CD8-positive, alpha-beta T cell (primary cell): ENCODE measurements at regions of chr1 and their contacts with region 1.

Region 1: DNA sequence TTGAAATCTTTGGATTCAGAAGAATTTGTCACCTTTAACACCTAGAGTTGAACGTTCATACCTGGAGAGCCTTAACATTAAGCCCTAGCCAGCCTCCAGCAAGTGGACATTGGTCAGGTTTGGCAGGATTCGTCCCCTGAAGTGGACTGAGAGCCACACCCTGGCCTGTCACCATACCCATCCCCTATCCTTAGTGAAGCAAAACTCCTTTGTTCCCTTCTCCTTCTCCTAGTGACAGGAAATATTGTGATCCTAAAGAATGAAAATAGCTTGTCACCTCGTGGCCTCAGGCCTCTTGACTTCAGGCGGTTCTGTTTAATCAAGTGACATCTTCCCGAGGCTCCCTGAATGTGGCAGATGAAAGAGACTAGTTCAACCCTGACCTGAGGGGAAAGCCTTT is 52.3 kb downstream of the UBE4B start:
- DNase-seq: no peak
- ATAC-seq: no peak
- H3K4me3 ChIP-seq: no peak overlapping the region
- H3K4me3 Mint-ChIP-seq: no peak overlapping the region
- H3K27ac ChIP-seq: no peak overlapping the region
- H3K27ac Mint-ChIP-seq: no peak overlapping the region
- H3K4me1 ChIP-seq: no peaks in the 10 kb centered on the region
- H3K4me1 Mint-ChIP-seq: peaks cover 10% of the 10 kb centered on the region
- H3K27me3 ChIP-seq: no peaks in the 10 kb centered on the region
- H3K27me3 Mint-ChIP-seq: no peaks in the 10 kb centered on the region
- CTCF ChIP-seq: no peak

Region 2: DNA sequence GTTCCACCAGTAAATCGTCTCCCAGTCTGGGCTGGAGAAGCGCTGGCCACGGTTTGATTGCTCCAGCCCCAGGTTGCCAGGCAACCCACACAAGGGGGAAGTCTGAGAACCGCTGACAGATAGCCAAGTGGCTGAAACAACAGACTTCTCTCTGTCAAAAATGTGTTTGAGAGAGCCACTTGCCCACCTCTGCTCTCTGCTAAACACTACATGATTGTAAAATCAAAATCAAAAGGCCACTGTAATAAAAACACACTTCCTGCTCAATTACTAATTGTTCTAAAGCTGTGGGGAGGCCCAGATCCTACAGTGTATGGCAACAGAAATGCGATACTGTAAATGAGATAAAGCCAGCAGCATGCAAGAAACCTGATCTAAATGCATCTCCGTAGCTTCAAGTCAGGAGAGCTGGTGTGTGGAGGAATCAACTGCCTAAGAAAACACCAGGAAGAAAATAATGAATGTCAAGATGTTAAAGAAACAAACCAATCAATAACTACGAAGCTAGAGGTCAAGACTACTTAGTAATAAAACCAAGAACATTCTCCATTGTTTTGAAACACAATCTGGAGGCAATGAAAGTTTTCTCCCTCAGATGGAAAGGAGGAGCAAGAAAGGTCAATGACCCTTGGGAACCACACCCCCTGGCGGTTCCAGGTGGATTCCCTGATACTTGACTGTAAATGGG is 1645.9 kb before region 1 on chr1:
- CTCF ChIA-PET with region 1: no interaction called
- POLR2A ChIA-PET with region 1: no interaction called
- intact Hi-C with region 1: no loop called
- DNase-seq: peak in 2 of 9 experiments; percentile 13 to 27
- ATAC-seq: no peak
- H3K4me3 ChIP-seq: no peak overlapping the region
- H3K4me3 Mint-ChIP-seq: no peak overlapping the region
- H3K27ac ChIP-seq: no peak overlapping the region
- H3K27ac Mint-ChIP-seq: no peak overlapping the region
- H3K4me1 ChIP-seq: no peaks in the 10 kb centered on the region
- H3K4me1 Mint-ChIP-seq: peaks cover 15% of the 10 kb centered on the region
- H3K27me3 ChIP-seq: no peaks in the 10 kb centered on the region
- H3K27me3 Mint-ChIP-seq: no peaks in the 10 kb centered on the region
- CTCF ChIP-seq: no peak

Region 3: GRCh38 chr1:10032590-10033358 is 52.3 kb before region 1 on chr1 and contains the start of gene UBE4B:
- CTCF ChIA-PET with region 1: no interaction called
- POLR2A ChIA-PET with region 1: no interaction called
- intact Hi-C with region 1: no loop called
- DNase-seq: peak; percentile 96 to 100 (median 99)
- ATAC-seq: peak; percentile 94
- H3K4me3 ChIP-seq: peak within 1 kb of the TSS; percentile 95 to 98
- H3K4me3 Mint-ChIP-seq: peak within 1 kb of the TSS; percentile 97
- H3K27ac ChIP-seq: peak within 1 kb of the TSS; percentile 93 to 94
- H3K27ac Mint-ChIP-seq: peak within 1 kb of the TSS; percentile 98
- H3K4me1 ChIP-seq: peaks cover 18% of the 10 kb centered on the region
- H3K4me1 Mint-ChIP-seq: peaks cover 23% of the 10 kb centered on the region
- H3K27me3 ChIP-seq: no peaks in the 10 kb centered on the region
- H3K27me3 Mint-ChIP-seq: no peaks in the 10 kb centered on the region
- CTCF ChIP-seq: peak; percentile 89
- total RNA-seq, gene UBE4B: 25.8 to 32.2 TPM

Region 4: GRCh38 chr1:10056599-10056987 is 28.5 kb before region 1 on chr1:
- CTCF ChIA-PET with region 1: no interaction called
- POLR2A ChIA-PET with region 1: no interaction called
- intact Hi-C with region 1: no loop called
- DNase-seq: no peak
- ATAC-seq: no peak
- H3K4me3 ChIP-seq: no peak overlapping the region
- H3K4me3 Mint-ChIP-seq: no peak overlapping the region
- H3K27ac ChIP-seq: no peak overlapping the region
- H3K27ac Mint-ChIP-seq: no peak overlapping the region
- H3K4me1 ChIP-seq: no peaks in the 10 kb centered on the region
- H3K4me1 Mint-ChIP-seq: peaks cover 16% of the 10 kb centered on the region
- H3K27me3 ChIP-seq: no peaks in the 10 kb centered on the region
- H3K27me3 Mint-ChIP-seq: no peaks in the 10 kb centered on the region
- CTCF ChIP-seq: no peak

Region 5: GRCh38 chr1:10070206-10070605 is 14.9 kb before region 1 on chr1:
- CTCF ChIA-PET with region 1: no interaction called
- POLR2A ChIA-PET with region 1: no interaction called
- intact Hi-C with region 1: loop called in 1 of 2 experiments (anchors 1 kb)
- DNase-seq: no peak
- ATAC-seq: no peak
- H3K4me3 ChIP-seq: no peak overlapping the region
- H3K4me3 Mint-ChIP-seq: no peak overlapping the region
- H3K27ac ChIP-seq: no peak overlapping the region
- H3K27ac Mint-ChIP-seq: no peak overlapping the region
- H3K4me1 ChIP-seq: no peaks in the 10 kb centered on the region
- H3K4me1 Mint-ChIP-seq: peaks cover 16% of the 10 kb centered on the region
- H3K27me3 ChIP-seq: no peaks in the 10 kb centered on the region
- H3K27me3 Mint-ChIP-seq: no peaks in the 10 kb centered on the region
- CTCF ChIP-seq: no peak

Region 6: GRCh38 chr1:10117865-10118264 is 32.8 kb after region 1 on chr1:
- CTCF ChIA-PET with region 1: no interaction called
- POLR2A ChIA-PET with region 1: no interaction called
- intact Hi-C with region 1: no loop called
- DNase-seq: no peak
- ATAC-seq: no peak
- H3K4me3 ChIP-seq: no peak overlapping the region
- H3K4me3 Mint-ChIP-seq: no peak overlapping the region
- H3K27ac ChIP-seq: no peak overlapping the region
- H3K27ac Mint-ChIP-seq: no peak overlapping the region
- H3K4me1 ChIP-seq: no peaks in the 10 kb centered on the region
- H3K4me1 Mint-ChIP-seq: no peaks in the 10 kb centered on the region
- H3K27me3 ChIP-seq: no peaks in the 10 kb centered on the region
- H3K27me3 Mint-ChIP-seq: no peaks in the 10 kb centered on the region
- CTCF ChIP-seq: no peak